SK-N-SH (cell line): ENCODE measurements at regions of chr5 and their contacts with region 1.

Region 1: GRCh38 chr5:60660038-60660437 is 39.9 kb downstream of the DEPDC1B start:
- DNase-seq: no peak
- H3K4me3 ChIP-seq: no peak overlapping the region
- H3K27ac ChIP-seq: no peak overlapping the region
- H3K4me1 ChIP-seq: no peaks in the 10 kb centered on the region
- H3K27me3 ChIP-seq: no peaks in the 10 kb centered on the region
- CTCF ChIP-seq: no peak
- EP300 ChIP-seq: no peak
- RAD21 ChIP-seq: no peak

Region 2: DNA sequence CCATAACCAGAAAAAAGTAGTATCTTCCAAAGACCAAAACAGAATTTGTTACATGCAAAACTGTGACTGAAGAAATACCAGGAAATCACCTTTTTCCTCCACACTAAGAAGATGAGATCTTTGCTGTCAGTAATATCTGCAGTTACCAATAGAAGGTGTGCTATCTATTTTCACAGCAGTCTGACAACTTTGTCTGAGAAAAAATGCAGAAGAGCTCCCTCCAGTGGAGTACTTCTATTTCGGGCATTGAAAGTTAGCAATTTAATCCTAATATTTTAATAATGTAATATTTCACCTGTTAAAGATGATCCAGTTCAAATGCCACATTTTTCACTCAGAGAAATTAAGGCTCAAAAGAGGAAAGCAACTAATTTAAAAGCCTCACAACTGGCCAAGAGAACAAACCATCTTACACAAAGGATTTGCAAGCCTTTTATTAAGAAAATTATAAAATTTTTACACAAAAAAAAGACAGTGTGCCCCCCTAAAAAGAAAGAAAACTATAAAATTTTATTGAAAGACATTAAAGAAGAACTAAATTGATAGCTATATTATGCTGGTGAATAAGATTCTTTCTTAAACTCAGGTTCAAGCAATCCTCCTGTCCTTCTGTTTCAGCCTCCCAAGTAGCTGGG is 10.6 kb before region 1 on chr5:
- CTCF ChIA-PET with region 1: interaction called, 14 read pairs
- POLR2A ChIA-PET with region 1: no interaction called
- DNase-seq: peak; percentile 23
- H3K4me3 ChIP-seq: no peak overlapping the region; a peak in 1 of 4 replicates
- H3K27ac ChIP-seq: no peak overlapping the region
- H3K4me1 ChIP-seq: no peaks in the 10 kb centered on the region
- H3K27me3 ChIP-seq: no peaks in the 10 kb centered on the region
- CTCF ChIP-seq: peak; percentile 82
- EP300 ChIP-seq: no peak
- RAD21 ChIP-seq: peak; percentile 71